ENCODE measurements at regions of chr6 and their contacts with region 1.

Region 1: GRCh38 chr6:31366693-31367470 is 9.9 kb upstream of the HLA-B start:
- DNase-seq: peak; percentile 79 to 92
- H3K4me3 ChIP-seq: no peak overlapping the region
- H3K4me1 ChIP-seq: no peaks in the 10 kb centered on the region
- H3K27me3 ChIP-seq: peaks cover 27% of the 10 kb centered on the region

Region 2: DNA sequence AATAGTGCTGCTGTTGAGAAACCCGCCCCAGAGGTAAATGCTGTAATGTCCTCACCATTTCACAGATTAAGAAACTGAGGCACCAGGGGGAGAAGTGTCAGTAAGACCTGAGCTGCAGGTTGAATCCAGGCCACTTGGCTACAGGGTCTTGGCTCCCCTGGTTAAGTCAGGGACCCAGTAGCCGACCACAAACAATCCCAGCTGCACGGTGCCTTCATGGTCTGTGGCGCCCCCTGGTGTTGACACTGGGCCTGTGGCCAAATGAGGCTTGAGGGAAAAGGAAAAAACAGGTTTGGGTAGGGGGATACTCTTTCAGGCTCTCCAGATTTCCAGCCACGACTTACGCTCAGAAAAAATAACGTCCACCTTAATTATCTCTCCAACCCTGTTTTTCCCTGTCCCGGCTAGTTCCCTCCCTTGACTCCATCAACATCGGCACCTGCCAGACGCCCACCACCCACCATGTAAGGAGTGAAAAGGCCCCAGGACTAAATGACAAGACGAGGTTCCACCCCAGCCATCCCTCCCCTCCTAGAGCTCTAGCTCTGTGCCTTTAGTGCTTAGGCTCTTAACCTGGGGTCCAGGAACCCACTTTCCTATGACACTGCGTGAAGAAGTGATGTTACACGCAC is 1353.5 kb before region 1 on chr6:
- in situ Hi-C with region 1: no loop called
- DNase-seq: peak in 1 of 2 experiments; percentile 27
- H3K4me3 ChIP-seq: no peak overlapping the region
- H3K4me1 ChIP-seq: no peaks in the 10 kb centered on the region
- H3K27me3 ChIP-seq: no peaks in the 10 kb centered on the region

Region 3: GRCh38 chr6:31139599-31139998 is 227.3 kb before region 1 on chr6:
- in situ Hi-C with region 1: loop called (anchors 5 kb)
- DNase-seq: no peak
- H3K4me3 ChIP-seq: no peak overlapping the region
- H3K4me1 ChIP-seq: peaks cover 3% of the 10 kb centered on the region
- H3K27me3 ChIP-seq: no peaks in the 10 kb centered on the region

Region 4: GRCh38 chr6:31197559-31198305 is 169.2 kb before region 1 on chr6:
- in situ Hi-C with region 1: loop called (anchors 5 kb)
- DNase-seq: peak; percentile 72 to 92
- H3K4me3 ChIP-seq: peak overlapping the region; percentile 62
- H3K4me1 ChIP-seq: peaks cover 12% of the 10 kb centered on the region
- H3K27me3 ChIP-seq: no peaks in the 10 kb centered on the region

Measured in HAP-1 (cell line).